Gastrocnemius medialis (tissue), 4 donors: ENCODE measurements at regions of chr18 and their contacts with region 1.

Region 1: GRCh38 chr18:13823707-13824395 is at the start of gene MC5R:
- DNase-seq: peak in 1 of 2 donors; percentile 22
- ATAC-seq: peak; percentile 56 to 80
- H3K4me3 ChIP-seq: peak within 1 kb of the TSS; percentile 32 to 58 (median 44)
- H3K27ac ChIP-seq: no peak within 1 kb of the TSS
- H3K4me1 ChIP-seq: peaks cover 0 to 4% of the 10 kb centered on the region in 2 donors
- H3K27me3 ChIP-seq: peaks cover 11 to 27% (median 17%) of the 10 kb centered on the region in 3 donors
- CTCF ChIP-seq: peak; percentile 70 to 93 (median 82)
- POLR2A ChIP-seq: no peak
- total RNA-seq, gene MC5R: not detected

Region 2: DNA sequence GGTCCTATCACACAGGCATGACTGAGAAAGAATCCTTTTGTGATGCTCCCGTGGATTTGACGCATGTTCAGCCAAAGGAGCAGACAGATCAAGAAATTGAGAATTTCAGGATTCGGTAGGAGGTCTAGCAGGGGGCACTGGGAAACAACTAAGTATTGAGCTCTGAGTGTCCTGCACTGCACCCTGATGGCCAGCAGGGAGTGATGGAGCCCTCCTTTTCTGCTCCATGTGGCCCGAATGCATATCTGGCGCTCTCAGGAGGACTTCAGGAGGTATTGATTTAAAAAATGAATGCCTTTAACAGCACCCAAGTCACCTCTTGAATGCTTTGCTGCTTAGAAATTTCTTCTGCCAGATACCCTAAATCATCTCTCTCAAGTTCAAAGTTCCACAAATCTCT is 250.3 kb after region 1 on chr18:
- in situ Hi-C with region 1: loop called in 3 of 4 experiments (anchors 25 kb)
- intact Hi-C with region 1: no loop called
- DNase-seq: no peak
- ATAC-seq: no peak
- H3K4me3 ChIP-seq: no peak overlapping the region
- H3K27ac ChIP-seq: no peak overlapping the region
- H3K4me1 ChIP-seq: no peaks in the 10 kb centered on the region
- H3K27me3 ChIP-seq: no peaks in the 10 kb centered on the region
- CTCF ChIP-seq: no peak
- POLR2A ChIP-seq: no peak

Region 3: DNA sequence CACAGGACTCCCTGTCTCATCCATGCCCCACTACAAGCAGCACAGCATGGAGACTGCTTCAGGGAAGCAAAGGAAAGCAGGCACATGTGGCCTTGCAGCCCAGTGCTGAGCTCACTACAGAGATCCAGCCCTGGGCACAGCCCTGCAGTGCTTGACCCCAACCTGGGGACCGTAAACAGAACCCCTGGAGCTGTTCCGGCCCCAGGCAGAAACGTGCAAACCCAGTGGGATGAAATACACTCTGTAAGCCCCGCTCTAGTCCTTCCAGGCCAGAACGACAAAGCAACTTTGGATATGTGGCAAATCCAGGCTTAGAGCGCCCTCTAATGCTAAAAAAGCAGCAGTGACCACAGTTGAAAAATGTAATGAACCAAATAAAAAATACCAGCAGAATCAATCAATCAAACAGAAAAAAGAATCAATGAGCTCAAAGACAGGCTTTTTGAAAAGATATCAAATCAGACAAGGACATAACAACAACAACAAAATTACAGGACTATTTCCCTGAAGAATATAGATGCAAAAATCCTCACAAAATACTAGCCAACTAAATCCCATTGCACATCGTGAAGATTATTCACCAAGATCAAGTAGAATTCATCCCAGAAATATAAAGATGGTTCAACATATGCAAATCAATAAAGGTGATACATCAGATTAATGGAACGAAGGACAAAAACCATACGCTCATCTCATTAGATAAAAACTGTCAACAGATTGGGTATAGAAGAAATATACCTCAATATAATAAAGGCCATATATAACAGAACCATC is 262.8 kb after region 1 on chr18:
- in situ Hi-C with region 1: loop called in 2 of 4 experiments (anchors 25 kb)
- intact Hi-C with region 1: loop called (anchors 2 kb)
- DNase-seq: no peak
- ATAC-seq: peak in 1 of 2 donors; percentile 39
- H3K4me3 ChIP-seq: no peak overlapping the region
- H3K27ac ChIP-seq: no peak overlapping the region
- H3K4me1 ChIP-seq: peaks cover 0 to 4% of the 10 kb centered on the region in 2 donors
- H3K27me3 ChIP-seq: no peaks in the 10 kb centered on the region
- CTCF ChIP-seq: peak; percentile 14 to 49 (median 34)
- POLR2A ChIP-seq: no peak